Transverse colon (tissue), 4 donors: ENCODE measurements at regions of chr17 and their contacts with region 1.

Region 1: GRCh38 chr17:10337976-10338375 is 34.8 kb downstream of the MYH13 start:
- DNase-seq: no peak
- H3K4me3 ChIP-seq: no peak overlapping the region
- H3K27ac ChIP-seq: no peak overlapping the region
- H3K4me1 ChIP-seq: no peaks in the 10 kb centered on the region
- H3K27me3 ChIP-seq: no peaks in the 10 kb centered on the region
- CTCF ChIP-seq: no peak
- EP300 ChIP-seq: no peak
- POLR2A ChIP-seq: no peak

Region 2: DNA sequence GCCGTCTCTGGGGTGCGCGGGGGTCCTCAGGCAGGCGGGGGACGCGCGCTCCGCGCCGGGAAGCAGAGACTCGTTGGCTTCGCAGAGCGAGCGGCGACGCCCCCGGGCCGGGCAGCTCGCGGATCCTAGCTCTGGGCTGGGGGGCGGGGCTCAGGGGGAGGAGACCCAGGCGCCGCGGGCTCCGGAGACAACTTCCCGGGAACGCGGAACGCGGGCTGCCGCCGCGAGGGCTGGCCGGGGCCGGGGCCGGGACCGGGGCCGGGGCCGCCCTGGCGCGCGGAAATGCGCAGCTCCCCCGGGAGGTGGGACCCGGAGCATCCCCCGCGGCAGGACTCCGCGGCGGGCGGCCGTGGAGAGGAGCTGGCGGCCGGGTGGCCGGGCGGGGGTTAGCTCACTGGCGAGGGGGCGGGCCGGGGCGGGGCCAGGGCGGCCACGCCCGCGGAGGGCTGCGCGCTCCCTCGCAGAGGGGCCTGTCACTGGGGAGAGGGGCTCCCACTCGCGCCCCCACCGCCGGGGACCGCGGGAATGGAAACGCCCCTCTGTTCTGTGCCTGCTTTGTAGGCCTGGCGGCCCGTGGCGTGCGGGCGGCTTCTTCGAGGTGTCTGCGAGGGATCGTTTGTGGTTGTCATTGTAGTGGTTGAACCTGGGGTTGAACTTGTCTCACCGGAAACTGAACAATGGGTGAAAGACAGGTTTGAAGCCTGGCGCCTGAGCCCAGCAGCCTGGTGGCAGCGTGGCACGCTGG is 139.3 kb before region 1 on chr17 and contains the start of gene GAS7:
- in situ Hi-C with region 1: no loop called
- intact Hi-C with region 1: no loop called
- DNase-seq: peak; percentile 41
- H3K4me3 ChIP-seq: peak within 1 kb of the TSS; percentile 38 to 52 (median 48)
- H3K27ac ChIP-seq: peak within 1 kb of the TSS; percentile 40 to 68 (median 60)
- H3K4me1 ChIP-seq: peaks cover 0 to 6% (median 2%) of the 10 kb centered on the region in 4 donors
- H3K27me3 ChIP-seq: peaks cover 34% of the 10 kb centered on the region
- CTCF ChIP-seq: no peak
- EP300 ChIP-seq: no peak
- POLR2A ChIP-seq: no peak
- total RNA-seq, gene GAS7: 9.2 to 59.1 (median 15.2) TPM

Region 3: GRCh38 chr17:10463402-10463801 is 125.4 kb after region 1 on chr17:
- in situ Hi-C with region 1: no loop called
- intact Hi-C with region 1: loop called (anchors 5 kb)
- DNase-seq: no peak
- H3K4me3 ChIP-seq: no peak overlapping the region
- H3K27ac ChIP-seq: no peak overlapping the region
- H3K4me1 ChIP-seq: peaks cover 0 to under 1% (median 0%) of the 10 kb centered on the region in 4 donors
- H3K27me3 ChIP-seq: no peaks in the 10 kb centered on the region
- CTCF ChIP-seq: no peak
- EP300 ChIP-seq: no peak
- POLR2A ChIP-seq: no peak

Region 4: GRCh38 chr17:10600571-10600970 is 262.6 kb after region 1 on chr17:
- in situ Hi-C with region 1: no loop called
- intact Hi-C with region 1: loop called (anchors 10 kb)
- DNase-seq: no peak
- H3K4me3 ChIP-seq: no peak overlapping the region
- H3K27ac ChIP-seq: no peak overlapping the region
- H3K4me1 ChIP-seq: no peaks in the 10 kb centered on the region
- H3K27me3 ChIP-seq: no peaks in the 10 kb centered on the region
- CTCF ChIP-seq: no peak
- EP300 ChIP-seq: no peak
- POLR2A ChIP-seq: no peak